Psoas muscle (tissue), 8 donors: ENCODE measurements at regions of chr14 and their contacts with region 1.

Region 1: GRCh38 chr14:36069532-36069894 is 107.0 kb downstream of the PTCSC3 start:
- DNase-seq: no peak
- ATAC-seq: peak in 1 of 4 donors; percentile 44
- H3K4me3 ChIP-seq: no peak overlapping the region
- H3K27ac ChIP-seq: no peak overlapping the region
- H3K4me1 ChIP-seq: no peaks in the 10 kb centered on the region
- H3K27me3 ChIP-seq: peaks cover 0 to 5% (median 0%) of the 10 kb centered on the region in 3 donors
- CTCF ChIP-seq: peak; percentile 7

Region 2: GRCh38 chr14:36520601-36521525 is 451.4 kb after region 1 on chr14:
- intact Hi-C with region 1: loop called in 1 of 2 experiments (anchors 10 kb)
- DNase-seq: no peak
- ATAC-seq: peak in 2 of 4 donors; percentile 47 to 52
- H3K4me3 ChIP-seq: peak overlapping the region; percentile 53
- H3K27ac ChIP-seq: no peak overlapping the region
- H3K4me1 ChIP-seq: peaks cover 29% of the 10 kb centered on the region
- H3K27me3 ChIP-seq: peaks cover 0 to 100% (median 78%) of the 10 kb centered on the region in 3 donors
- CTCF ChIP-seq: no peak